ENCODE measurements at regions of chr3 and their contacts with region 1.

Region 1: DNA sequence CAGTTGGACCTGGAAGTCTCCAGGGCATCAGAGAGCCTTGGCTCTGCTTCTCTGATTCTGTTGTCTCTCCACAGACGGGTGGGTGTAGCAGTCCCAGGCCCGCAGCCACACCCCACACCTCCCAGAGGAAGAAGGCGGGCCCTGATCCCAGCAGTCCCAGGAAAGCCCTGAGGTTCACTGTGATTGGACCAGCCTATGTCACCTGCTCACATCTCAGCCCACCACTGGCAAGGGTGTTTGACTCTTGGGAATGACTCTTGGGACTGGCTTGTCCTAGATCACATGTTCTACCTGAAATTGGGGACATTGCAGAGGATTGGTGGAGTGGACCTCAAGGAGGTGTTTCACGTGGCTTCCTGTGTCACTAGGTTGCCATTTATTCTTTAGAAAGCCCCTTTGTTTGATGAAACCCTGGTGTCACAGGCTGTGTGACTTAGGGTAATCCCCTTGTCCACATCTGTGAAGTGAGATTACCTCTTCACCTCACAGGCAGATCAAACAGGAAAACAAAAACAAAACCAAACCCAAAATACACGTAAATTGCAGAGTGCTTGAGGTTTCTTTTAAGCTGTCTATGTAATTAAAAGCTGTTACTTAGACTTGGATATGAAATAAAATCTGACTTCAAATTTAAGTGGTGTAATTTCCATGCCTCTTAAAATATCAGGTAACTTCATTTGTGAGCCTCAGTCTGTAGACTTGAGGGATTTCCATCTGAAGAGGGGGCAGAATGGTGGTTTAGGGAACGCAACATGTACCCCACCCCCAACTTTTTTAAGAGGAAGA is 26.7 kb downstream of the FLNB start:
- DNase-seq: peak; percentile 78
- H3K4me3 Mint-ChIP-seq: no peak overlapping the region
- H3K27ac Mint-ChIP-seq: peak overlapping the region; percentile 84
- H3K4me1 Mint-ChIP-seq: peaks cover 60% of the 10 kb centered on the region
- H3K27me3 Mint-ChIP-seq: no peaks in the 10 kb centered on the region

Region 2: GRCh38 chr3:57555738-57556458 is 479.0 kb before region 1 on chr3 and contains the start of gene PDE12:
- CTCF ChIA-PET with region 1: no interaction called
- intact Hi-C with region 1: loop called (anchors 1 kb)
- DNase-seq: peak; percentile 89
- H3K4me3 Mint-ChIP-seq: peak within 1 kb of the TSS; percentile 98
- H3K27ac Mint-ChIP-seq: peak within 1 kb of the TSS; percentile 98
- H3K4me1 Mint-ChIP-seq: peaks cover 33% of the 10 kb centered on the region
- H3K27me3 Mint-ChIP-seq: no peaks in the 10 kb centered on the region
- total RNA-seq, gene PDE12: 15.3 to 15.6 TPM

Region 3: DNA sequence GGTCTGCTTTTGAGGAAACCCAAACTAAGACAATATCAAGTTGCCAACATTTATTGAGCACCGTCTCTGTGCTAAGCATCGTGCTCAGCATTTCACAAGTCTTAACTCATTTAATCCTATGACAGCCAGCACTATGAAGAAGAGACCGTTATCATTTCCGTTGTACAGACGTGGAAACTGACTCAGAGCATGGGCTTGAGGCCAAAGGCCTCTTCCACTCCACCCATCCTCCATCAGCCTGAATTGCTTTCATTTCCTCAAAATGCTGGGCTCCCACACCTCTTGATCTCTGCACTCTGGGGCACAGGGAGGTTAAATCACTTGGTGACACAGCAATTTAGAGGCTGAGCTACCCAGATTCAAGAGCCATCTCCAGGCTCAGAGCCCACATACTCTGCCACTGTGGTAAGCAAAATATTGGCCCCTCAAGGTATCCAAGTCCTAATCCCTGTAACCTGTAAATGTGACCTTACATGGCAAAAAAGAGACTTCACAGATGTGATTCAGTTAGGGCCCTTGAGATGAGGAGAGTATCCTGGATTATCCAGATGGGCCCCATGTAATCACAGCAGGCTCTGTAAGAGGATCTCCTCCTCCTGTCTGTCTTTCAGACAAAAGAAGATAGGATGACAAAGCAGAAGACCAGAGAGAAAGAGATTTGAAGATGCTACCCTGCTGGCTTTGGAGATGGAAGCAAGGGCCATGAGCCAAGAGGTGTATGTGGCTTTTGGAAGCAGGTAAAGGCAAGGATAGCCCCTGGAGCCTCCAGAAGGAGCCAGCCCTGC is 51.0 kb before region 1 on chr3:
- CTCF ChIA-PET with region 1: no interaction called
- intact Hi-C with region 1: loop called (anchors 1 kb)
- DNase-seq: peak; percentile 83
- H3K4me3 Mint-ChIP-seq: no peak overlapping the region
- H3K27ac Mint-ChIP-seq: peak overlapping the region; percentile 77
- H3K4me1 Mint-ChIP-seq: peaks cover 22% of the 10 kb centered on the region
- H3K27me3 Mint-ChIP-seq: no peaks in the 10 kb centered on the region

Region 4: GRCh38 chr3:58052373-58053273 is 17.7 kb after region 1 on chr3:
- CTCF ChIA-PET with region 1: no interaction called
- intact Hi-C with region 1: loop called (anchors 2 kb)
- DNase-seq: peak; percentile 72
- H3K4me3 Mint-ChIP-seq: no peak overlapping the region
- H3K27ac Mint-ChIP-seq: no peak overlapping the region
- H3K4me1 Mint-ChIP-seq: peaks cover 29% of the 10 kb centered on the region
- H3K27me3 Mint-ChIP-seq: no peaks in the 10 kb centered on the region

Region 5: DNA sequence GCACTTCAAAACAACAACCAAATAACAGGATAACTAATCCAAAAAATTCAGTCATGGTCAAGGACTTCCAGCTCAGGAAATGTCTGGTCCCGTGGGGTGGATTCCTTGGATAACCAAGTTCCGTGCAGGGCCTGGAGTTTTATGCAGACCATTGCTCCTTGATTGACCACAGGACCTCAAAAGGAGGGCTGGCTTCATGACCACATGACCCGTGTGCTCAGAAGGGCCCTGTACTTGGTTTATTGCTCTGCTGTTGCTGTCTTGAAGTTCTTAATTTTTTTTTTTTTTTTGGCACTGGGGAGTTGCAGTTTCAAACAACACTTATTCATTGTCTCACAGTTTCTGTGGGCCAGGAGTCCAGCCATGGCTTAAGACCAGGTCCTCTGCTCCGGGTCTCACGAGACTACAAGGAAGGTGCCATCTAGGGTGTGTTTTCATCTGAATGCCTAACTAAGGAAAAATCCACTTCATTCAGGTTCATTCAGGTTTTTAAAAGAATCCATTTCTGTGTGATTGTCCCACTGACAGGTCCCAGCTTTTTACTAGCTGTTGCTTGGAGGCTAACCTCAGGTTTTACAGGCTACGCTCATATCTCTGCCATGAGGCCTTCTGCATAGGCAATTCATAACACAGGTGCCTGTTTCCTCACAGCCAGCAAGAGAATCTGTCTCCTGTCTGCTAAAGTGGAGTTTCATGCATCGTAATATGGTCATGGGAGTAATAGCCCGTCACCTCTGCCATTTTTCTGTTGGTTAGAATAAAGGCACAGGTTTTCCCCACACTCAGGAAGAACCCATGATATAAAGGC is 38.6 kb after region 1 on chr3:
- CTCF ChIA-PET with region 1: no interaction called
- intact Hi-C with region 1: loop called (anchors 2 kb)
- DNase-seq: peak; percentile 32
- H3K4me3 Mint-ChIP-seq: no peak overlapping the region
- H3K27ac Mint-ChIP-seq: peak overlapping the region; percentile 44
- H3K4me1 Mint-ChIP-seq: peaks cover 42% of the 10 kb centered on the region
- H3K27me3 Mint-ChIP-seq: no peaks in the 10 kb centered on the region

Region 6: DNA sequence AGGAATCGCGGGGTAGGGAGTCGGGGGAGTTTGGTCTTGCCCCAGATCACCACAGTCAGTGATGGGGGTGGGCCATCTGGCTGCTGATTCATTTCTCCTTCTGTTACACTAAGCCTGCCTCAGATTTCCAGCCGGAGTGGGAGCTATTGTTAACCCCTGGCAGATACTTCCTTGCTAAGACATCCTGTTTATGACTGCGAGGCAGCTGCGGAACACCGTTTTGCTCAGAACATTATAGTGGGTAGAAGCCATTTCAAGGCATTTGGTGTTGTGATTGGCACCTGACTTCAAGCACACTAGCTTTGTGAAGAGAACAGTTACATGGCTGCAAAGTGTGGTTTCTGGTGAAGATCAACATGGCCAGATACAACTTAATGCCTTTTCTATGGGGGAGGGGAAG is 47.1 kb after region 1 on chr3:
- CTCF ChIA-PET with region 1: no interaction called
- intact Hi-C with region 1: loop called (anchors 2 kb)
- DNase-seq: peak; percentile 73
- H3K4me3 Mint-ChIP-seq: peak overlapping the region; percentile 23
- H3K27ac Mint-ChIP-seq: peak overlapping the region; percentile 79
- H3K4me1 Mint-ChIP-seq: peaks cover 63% of the 10 kb centered on the region
- H3K27me3 Mint-ChIP-seq: no peaks in the 10 kb centered on the region

Region 7: DNA sequence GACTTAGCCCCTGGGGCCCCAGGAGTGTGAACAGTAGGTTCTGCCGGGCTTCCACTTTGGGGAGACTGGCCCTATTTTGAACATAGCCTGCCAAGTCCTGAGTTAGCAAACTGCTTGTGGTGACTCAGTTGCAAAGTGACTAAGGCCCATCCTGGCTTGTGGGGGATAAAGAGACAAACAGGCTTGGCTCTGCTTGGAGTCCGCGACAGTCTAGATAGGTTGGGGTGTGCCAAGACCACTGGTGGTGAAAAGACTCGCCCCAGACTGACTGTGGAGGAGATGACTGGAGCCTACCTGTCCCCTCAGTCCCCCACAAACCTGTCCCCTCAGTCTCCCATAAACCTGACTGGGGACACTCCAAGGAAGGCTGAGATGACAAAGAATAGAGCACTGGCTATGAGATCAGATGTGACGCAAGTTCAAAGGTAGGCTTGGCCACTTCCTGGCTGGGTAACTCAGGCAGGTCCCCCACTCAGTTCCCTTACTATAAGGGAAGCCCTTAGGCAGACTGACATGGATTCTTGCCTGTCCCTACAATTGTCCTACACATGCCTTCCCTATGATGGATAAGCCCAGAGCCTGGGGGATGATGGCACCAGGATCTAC is 171.6 kb after region 1 on chr3:
- CTCF ChIA-PET with region 1: no interaction called
- intact Hi-C with region 1: no loop called
- DNase-seq: peak; percentile 64
- H3K4me3 Mint-ChIP-seq: no peak overlapping the region
- H3K27ac Mint-ChIP-seq: no peak overlapping the region
- H3K4me1 Mint-ChIP-seq: peaks cover 9% of the 10 kb centered on the region
- H3K27me3 Mint-ChIP-seq: peaks cover 5% of the 10 kb centered on the region

Region 8: GRCh38 chr3:58693929-58694850 is 659.3 kb after region 1 on chr3:
- CTCF ChIA-PET with region 1: no interaction called
- intact Hi-C with region 1: no loop called
- DNase-seq: no peak
- H3K4me3 Mint-ChIP-seq: no peak overlapping the region
- H3K27ac Mint-ChIP-seq: no peak overlapping the region
- H3K4me1 Mint-ChIP-seq: no peaks in the 10 kb centered on the region
- H3K27me3 Mint-ChIP-seq: peaks cover 14% of the 10 kb centered on the region

Measured in activated naive CD4-positive, alpha-beta T cell treated with anti-CD3 and anti-CD28 coated beads for 36 hours (primary cell).